Activated T-helper 2 cell treated with anti-CD3 and anti-CD28 coated beads, Interferon-gamma antibody, Interleukin-2, Interleukin-4, amounts not matched to agents 10 μg/mL and 5 μg/mL and 100 μg/mL, durations not matched to agents 14 hours and 24 hours and 36 hours (primary cell): ENCODE measurements at regions of chr1 and their contacts with region 1.

Region 1: GRCh38 chr1:19204446-19205266 is 5.4 kb downstream of the UBR4 start:
- DNase-seq: no peak
- H3K4me3 Mint-ChIP-seq: no peak overlapping the region
- H3K27ac Mint-ChIP-seq: peak overlapping the region; percentile 65
- H3K4me1 Mint-ChIP-seq: peaks cover 51% of the 10 kb centered on the region
- H3K27me3 Mint-ChIP-seq: no peaks in the 10 kb centered on the region

Region 2: GRCh38 chr1:19153169-19153568 is 51.5 kb before region 1 on chr1:
- intact Hi-C with region 1: no loop called
- DNase-seq: no peak
- H3K4me3 Mint-ChIP-seq: no peak overlapping the region
- H3K27ac Mint-ChIP-seq: no peak overlapping the region
- H3K4me1 Mint-ChIP-seq: peaks cover 6% of the 10 kb centered on the region
- H3K27me3 Mint-ChIP-seq: no peaks in the 10 kb centered on the region

Region 3: GRCh38 chr1:19186001-19186400 is 18.7 kb before region 1 on chr1:
- intact Hi-C with region 1: loop called (anchors 1 kb)
- DNase-seq: no peak
- H3K4me3 Mint-ChIP-seq: peak overlapping the region; percentile 60
- H3K27ac Mint-ChIP-seq: peak overlapping the region; percentile 94
- H3K4me1 Mint-ChIP-seq: peaks cover 28% of the 10 kb centered on the region
- H3K27me3 Mint-ChIP-seq: no peaks in the 10 kb centered on the region

Region 4: DNA sequence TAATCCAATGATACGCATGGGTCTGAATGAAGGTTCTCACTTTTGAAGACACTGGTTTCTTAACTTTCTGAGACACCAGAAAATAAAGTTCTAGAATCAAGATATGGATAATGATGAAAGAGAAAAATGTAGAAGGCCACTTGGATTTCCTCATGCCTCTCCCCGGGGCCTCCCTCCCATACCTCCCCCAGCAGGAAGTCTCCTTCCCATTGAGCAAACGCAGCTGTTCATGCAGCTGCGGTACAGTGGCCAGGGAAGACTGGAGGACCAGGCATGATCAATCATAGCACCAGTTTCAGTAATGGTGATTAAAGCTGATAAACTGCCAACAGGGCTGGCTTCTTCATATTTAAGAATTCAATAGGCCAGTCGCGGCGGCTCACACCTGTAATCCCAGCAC is 16.3 kb after region 1 on chr1:
- intact Hi-C with region 1: no loop called
- DNase-seq: no peak
- H3K4me3 Mint-ChIP-seq: no peak overlapping the region
- H3K27ac Mint-ChIP-seq: no peak overlapping the region
- H3K4me1 Mint-ChIP-seq: peaks cover 11% of the 10 kb centered on the region
- H3K27me3 Mint-ChIP-seq: no peaks in the 10 kb centered on the region